Panc1 (cell line): ENCODE measurements at regions of chr19 and their contacts with region 1.

Region 1: DNA sequence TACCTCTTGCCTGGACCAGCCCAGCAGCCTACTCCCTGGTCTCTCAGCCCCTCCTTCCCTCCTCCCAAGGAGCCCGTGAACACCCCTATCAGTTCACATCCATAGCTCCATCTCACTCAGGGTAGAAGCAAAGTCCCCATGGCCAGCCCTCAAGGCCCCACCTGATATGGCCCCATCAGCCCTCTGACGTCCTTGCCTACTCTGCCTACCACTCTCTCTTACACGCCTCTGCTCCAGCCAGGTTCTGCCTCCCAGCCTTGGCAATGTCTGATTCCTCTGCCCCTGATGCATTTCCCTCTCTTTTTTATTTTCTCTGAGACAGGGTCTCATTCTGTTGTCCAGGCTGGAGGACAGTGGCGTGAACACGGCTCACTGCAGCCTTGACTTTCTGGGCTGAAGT is 7.9 kb upstream of the SERTAD3 start:
- DNase-seq: no peak
- ATAC-seq: no peak
- H3K4me3 ChIP-seq: no peak overlapping the region
- H3K27ac ChIP-seq: no peak overlapping the region
- H3K4me1 ChIP-seq: no peaks in the 10 kb centered on the region
- H3K27me3 ChIP-seq: no peaks in the 10 kb centered on the region
- CTCF ChIP-seq: no peak

Region 2: DNA sequence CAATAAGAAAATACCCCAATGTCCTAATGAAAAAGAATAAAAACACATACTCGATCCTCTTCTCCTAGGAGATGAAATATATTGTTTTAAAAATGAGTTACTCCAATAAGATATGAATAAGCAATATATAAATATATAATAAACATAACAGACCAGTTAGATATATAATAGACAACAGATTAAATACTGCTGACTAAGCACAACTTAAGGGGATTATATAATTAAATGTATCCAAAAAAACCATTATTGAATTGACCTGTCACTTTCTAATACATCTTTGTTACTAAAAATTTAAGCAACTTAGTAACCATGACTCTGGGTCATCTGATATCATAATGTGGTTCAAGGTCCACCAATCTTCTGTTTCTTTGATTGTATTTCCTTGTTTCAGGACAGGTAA is 382.0 kb before region 1 on chr19:
- CTCF ChIA-PET with region 1: no interaction called
- POLR2A ChIA-PET with region 1: no interaction called
- in situ Hi-C with region 1: no loop called
- intact Hi-C with region 1: no loop called
- DNase-seq: no peak
- ATAC-seq: no peak
- H3K4me3 ChIP-seq: no peak overlapping the region
- H3K27ac ChIP-seq: no peak overlapping the region
- H3K4me1 ChIP-seq: no peaks in the 10 kb centered on the region
- H3K27me3 ChIP-seq: no peaks in the 10 kb centered on the region
- CTCF ChIP-seq: no peak

Region 3: GRCh38 chr19:40348125-40348913 is 103.7 kb before region 1 on chr19 and contains the starts of genes C19orf47 and PLD3:
- CTCF ChIA-PET with region 1: no interaction called
- POLR2A ChIA-PET with region 1: interaction called, 11 read pairs
- in situ Hi-C with region 1: no loop called
- intact Hi-C with region 1: no loop called
- DNase-seq: peak; percentile 78
- ATAC-seq: peak; percentile 99
- H3K4me3 ChIP-seq: peak within 1 kb of the TSS; percentile 80 to 98
- H3K27ac ChIP-seq: peak within 1 kb of the TSS; percentile 85
- H3K4me1 ChIP-seq: peaks cover 3% of the 10 kb centered on the region; the same call in 1 of the 2 replicates
- H3K27me3 ChIP-seq: no peaks in the 10 kb centered on the region
- CTCF ChIP-seq: no peak
- total RNA-seq, gene C19orf47: 29.0 TPM
- total RNA-seq, gene PLD3: 81.8 TPM

Region 4: GRCh38 chr19:40465557-40466150 is 13.6 kb after region 1 on chr19 and contains the start of gene BLVRB:
- CTCF ChIA-PET with region 1: no interaction called
- POLR2A ChIA-PET with region 1: interaction called, 10 read pairs
- in situ Hi-C with region 1: no loop called
- intact Hi-C with region 1: no loop called
- DNase-seq: peak; percentile 92
- ATAC-seq: peak; percentile 96
- H3K4me3 ChIP-seq: peak within 1 kb of the TSS; percentile 68 to 82
- H3K27ac ChIP-seq: peak within 1 kb of the TSS; percentile 82
- H3K4me1 ChIP-seq: peaks cover 10% of the 10 kb centered on the region; the same call in 1 of the 2 replicates
- H3K27me3 ChIP-seq: no peaks in the 10 kb centered on the region
- CTCF ChIP-seq: no peak
- total RNA-seq, gene BLVRB: 45.6 TPM

Region 5: GRCh38 chr19:40623403-40624251 is 171.6 kb after region 1 on chr19:
- CTCF ChIA-PET with region 1: no interaction called
- POLR2A ChIA-PET with region 1: no interaction called
- in situ Hi-C with region 1: no loop called
- intact Hi-C with region 1: no loop called
- DNase-seq: no peak
- ATAC-seq: peak; percentile 95
- H3K4me3 ChIP-seq: no peak overlapping the region
- H3K27ac ChIP-seq: no peak overlapping the region
- H3K4me1 ChIP-seq: no peaks in the 10 kb centered on the region
- H3K27me3 ChIP-seq: no peaks in the 10 kb centered on the region
- CTCF ChIP-seq: no peak